H1 (cell line): ENCODE measurements at regions of chr3 and their contacts with region 1.

Region 1: DNA sequence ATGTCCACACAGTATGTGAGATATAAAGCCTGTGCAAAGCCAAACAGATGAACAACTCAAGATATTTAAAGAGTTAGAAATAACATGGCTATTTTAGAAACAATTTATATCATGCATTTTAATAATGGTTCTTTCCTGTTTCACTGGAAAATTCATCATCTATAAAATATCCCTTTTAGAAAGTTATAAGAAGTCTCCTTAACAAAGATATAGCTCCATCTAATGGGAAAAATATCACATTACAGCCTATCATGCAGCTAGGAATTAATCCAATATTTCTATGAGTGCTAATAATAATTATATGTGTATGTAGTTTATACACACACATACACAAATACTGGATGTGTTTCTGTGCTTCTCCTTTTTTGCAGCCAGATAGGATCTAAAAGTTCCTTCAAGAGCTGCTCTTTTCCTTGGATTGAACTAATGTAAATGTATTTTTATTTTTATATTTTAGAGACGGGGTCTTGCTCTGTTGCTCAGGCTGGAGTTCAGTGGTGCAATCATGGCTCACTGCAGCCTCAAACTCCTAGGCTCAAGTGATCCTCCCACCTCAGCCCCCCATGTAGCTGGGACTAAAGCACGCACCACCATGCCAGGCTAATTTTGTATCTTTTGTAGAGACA is 21.6 kb downstream of the RPL22L1 start:
- DNase-seq: no peak
- H3K4me3 ChIP-seq: no peak overlapping the region
- H3K27ac ChIP-seq: no peak overlapping the region
- H3K4me1 ChIP-seq: no peaks in the 10 kb centered on the region
- H3K27me3 ChIP-seq: no peaks in the 10 kb centered on the region
- CTCF ChIP-seq: no peak
- EP300 ChIP-seq: no peak
- POLR2A ChIP-seq: no peak
- RAD21 ChIP-seq: peak in 1 of 2 experiments; percentile 24; a peak in 2 of 4 replicates

Region 2: DNA sequence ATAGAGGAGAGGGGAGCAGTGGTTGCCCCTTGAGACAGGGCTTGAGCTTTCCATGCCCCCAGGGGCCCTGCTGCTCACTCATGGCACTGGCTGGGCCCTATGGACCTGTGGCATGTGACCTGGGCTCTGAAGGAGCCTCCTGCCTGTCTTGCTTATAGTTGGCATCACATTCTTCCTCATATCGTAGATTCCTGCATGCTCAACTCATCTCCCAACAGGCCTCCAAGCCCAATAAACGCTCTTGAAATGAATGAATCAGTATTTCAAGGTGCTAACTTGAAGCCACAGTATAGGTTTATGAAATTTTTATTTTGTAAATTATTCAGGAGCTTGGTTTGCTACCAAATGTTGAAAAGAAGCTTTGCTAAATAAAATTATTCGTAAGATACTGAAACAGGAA is 169.2 kb before region 1 on chr3:
- CTCF ChIA-PET with region 1: no interaction called
- POLR2A ChIA-PET with region 1: no interaction called
- DNase-seq: no peak
- H3K4me3 ChIP-seq: no peak overlapping the region
- H3K27ac ChIP-seq: no peak overlapping the region
- H3K4me1 ChIP-seq: no peaks in the 10 kb centered on the region
- H3K27me3 ChIP-seq: no peaks in the 10 kb centered on the region
- CTCF ChIP-seq: no peak
- EP300 ChIP-seq: no peak
- POLR2A ChIP-seq: no peak
- RAD21 ChIP-seq: no peak

Region 3: DNA sequence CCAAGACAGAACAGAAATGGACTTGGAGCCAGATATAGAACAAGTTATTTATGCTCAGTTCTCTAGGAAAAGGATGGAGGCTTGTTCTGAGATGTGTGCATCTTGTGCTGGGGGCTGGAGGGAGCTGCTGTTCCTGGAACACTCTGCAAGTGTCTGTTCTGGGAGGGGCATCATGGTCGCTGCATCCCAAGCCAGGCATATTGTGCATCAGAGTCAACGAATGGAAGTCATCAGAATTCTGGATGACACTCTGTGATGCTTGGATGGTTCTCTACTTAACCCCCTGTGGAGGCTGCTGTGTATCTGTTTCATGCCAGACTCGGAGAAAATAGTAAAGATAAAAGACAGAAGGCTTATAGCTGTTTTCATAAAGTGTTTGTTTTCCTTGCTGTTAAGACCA is 13.1 kb before region 1 on chr3:
- CTCF ChIA-PET with region 1: interaction called, 11 read pairs
- POLR2A ChIA-PET with region 1: interaction called, 3 read pairs
- DNase-seq: no peak
- H3K4me3 ChIP-seq: no peak overlapping the region
- H3K27ac ChIP-seq: no peak overlapping the region
- H3K4me1 ChIP-seq: peaks cover 2 to 12% (median 5%) of the 10 kb centered on the region in 4 experiments; a peak in 3 of 7 replicates
- H3K27me3 ChIP-seq: no peaks in the 10 kb centered on the region
- CTCF ChIP-seq: no peak
- EP300 ChIP-seq: no peak
- POLR2A ChIP-seq: no peak
- RAD21 ChIP-seq: no peak